Ascending aorta (tissue), 2 donors: ENCODE measurements at regions of chr3 and their contacts with region 1.

Region 1: GRCh38 chr3:124373524-124373923 is 356.7 kb upstream of the UMPS start:
- DNase-seq: no peak
- H3K4me3 ChIP-seq: no peak overlapping the region
- H3K27ac ChIP-seq: no peak overlapping the region
- H3K4me1 ChIP-seq: no peaks in the 10 kb centered on the region
- H3K27me3 ChIP-seq: no peaks in the 10 kb centered on the region
- CTCF ChIP-seq: no peak

Region 2: GRCh38 chr3:124315215-124316033 is 58.1 kb before region 1 on chr3:
- intact Hi-C with region 1: no loop called
- DNase-seq: peak in 1 of 2 donors; percentile 81
- H3K4me3 ChIP-seq: no peak overlapping the region
- H3K27ac ChIP-seq: peak overlapping the region; percentile 12 to 28
- H3K4me1 ChIP-seq: peaks cover 0 to 24% of the 10 kb centered on the region in 2 donors
- H3K27me3 ChIP-seq: no peaks in the 10 kb centered on the region
- CTCF ChIP-seq: no peak

Region 3: GRCh38 chr3:124456506-124456905 is 83.0 kb after region 1 on chr3:
- intact Hi-C with region 1: loop called (anchors 5 kb)
- DNase-seq: no peak
- H3K4me3 ChIP-seq: no peak overlapping the region
- H3K27ac ChIP-seq: no peak overlapping the region
- H3K4me1 ChIP-seq: no peaks in the 10 kb centered on the region
- H3K27me3 ChIP-seq: no peaks in the 10 kb centered on the region
- CTCF ChIP-seq: no peak

Region 4: GRCh38 chr3:125220727-125221429 is 847.4 kb after region 1 on chr3:
- intact Hi-C with region 1: no loop called
- DNase-seq: no peak
- H3K4me3 ChIP-seq: no peak overlapping the region
- H3K27ac ChIP-seq: no peak overlapping the region
- H3K4me1 ChIP-seq: no peaks in the 10 kb centered on the region
- H3K27me3 ChIP-seq: no peaks in the 10 kb centered on the region
- CTCF ChIP-seq: no peak